ENCODE measurements at regions of chr1 and their contacts with region 1.

Region 1: DNA sequence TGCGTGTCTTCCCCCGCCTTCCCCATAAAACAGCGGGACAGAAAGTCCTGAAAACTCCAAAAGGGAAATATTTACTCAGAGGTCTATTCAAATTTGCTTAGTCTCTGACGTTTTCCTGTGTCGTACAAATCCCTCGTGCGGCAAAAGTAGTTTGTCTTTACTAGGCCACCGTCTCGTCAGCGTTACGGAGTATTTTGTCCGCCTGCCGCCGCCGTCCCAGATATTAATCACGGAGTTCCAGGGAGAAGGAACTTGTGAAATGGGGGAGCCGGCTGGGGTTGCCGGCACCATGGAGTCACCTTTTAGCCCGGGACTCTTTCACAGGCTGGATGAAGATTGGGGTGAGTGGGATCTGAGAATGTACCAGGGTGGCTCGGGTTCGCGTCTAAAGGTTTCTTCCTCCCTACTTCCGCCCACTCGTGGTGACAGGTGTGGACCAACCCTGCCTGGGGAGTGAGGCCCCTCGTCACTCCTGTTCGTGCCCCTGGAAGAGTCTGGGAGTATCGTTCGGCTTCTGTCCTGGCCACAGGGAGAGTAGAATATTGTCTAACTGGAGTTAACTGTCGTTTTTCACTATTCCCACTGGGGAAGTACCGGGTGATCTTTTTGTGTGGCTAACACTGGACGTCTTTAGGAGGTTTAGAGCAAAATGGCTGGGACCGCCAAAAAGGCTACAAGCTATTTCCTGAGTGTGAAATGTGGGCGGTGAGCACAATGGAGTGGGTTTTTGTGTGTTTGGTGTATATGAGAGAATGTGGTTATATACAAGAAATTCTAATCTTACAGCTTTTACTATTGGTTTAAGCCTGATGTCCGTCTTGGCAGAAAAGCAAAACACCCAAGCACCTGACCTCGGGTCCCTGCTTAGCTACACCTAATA is at the start of gene ATF6:
- DNase-seq: peak; percentile 78 to 97
- ATAC-seq: peak; percentile 75 to 84
- H3K4me3 ChIP-seq: peak within 1 kb of the TSS; percentile 93
- H3K27ac ChIP-seq: peak within 1 kb of the TSS; percentile 92 to 94
- H3K4me1 ChIP-seq: peaks cover 10% of the 10 kb centered on the region; the same call in 1 of the 3 replicates
- CTCF ChIP-seq: no peak
- EP300 ChIP-seq: 0 out of 5 replicates have a peak, but pooled peaks of 1 of the 2 experiments have one; percentile 19
- POLR2A ChIP-seq: peak; percentile 43
- RAD21 ChIP-seq: no peak
- polyA plus RNA-seq, gene ATF6: 26.8 and 28.0 TPM in 2 replicates

Region 2: DNA sequence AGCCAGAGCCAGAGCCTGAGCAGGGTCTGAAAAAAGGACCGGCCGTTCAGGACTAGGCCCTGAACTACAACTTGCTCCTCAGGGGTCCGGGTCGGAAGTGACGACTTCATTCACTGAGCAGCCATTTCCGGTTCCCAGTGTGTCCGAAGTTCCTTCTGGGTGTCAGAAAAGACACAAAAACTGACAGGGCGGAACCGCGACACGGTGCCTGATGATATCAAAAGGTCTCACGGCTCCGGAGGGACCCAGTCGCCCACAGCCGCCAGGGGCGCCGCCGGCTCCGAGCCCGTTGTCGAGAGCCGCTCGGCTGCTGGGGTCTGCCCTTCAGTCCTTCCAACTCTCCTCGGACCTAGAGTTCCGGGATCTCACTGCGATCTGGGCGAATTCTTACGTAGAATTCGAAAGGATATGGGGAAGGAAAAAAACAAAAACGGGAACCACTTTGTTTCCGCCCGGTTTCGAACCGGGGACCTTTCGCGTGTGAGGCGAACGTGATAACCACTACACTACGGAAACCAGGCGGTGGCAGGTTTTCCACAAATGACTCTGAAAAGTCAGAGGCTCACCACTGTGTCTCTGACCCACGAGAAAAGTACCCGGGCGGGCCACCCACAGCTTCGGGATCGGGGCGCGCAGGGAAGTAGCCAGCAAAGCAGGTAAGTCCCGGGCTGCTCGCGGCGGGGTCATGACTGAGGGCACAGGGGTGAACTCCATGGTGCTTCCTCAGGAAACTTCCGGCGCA is 366.9 kb before region 1 on chr1:
- CTCF ChIA-PET with region 1: no interaction called
- POLR2A ChIA-PET with region 1: no interaction called
- DNase-seq: peak; percentile 93 to 96
- ATAC-seq: peak; percentile 85 to 87
- H3K4me3 ChIP-seq: peak overlapping the region; percentile 68
- H3K27ac ChIP-seq: peak overlapping the region; percentile 94 to 97
- H3K4me1 ChIP-seq: peaks cover 21% of the 10 kb centered on the region
- CTCF ChIP-seq: no peak; the same call in 2 of the 3 replicates
- EP300 ChIP-seq: no peak
- POLR2A ChIP-seq: peak; percentile 73
- RAD21 ChIP-seq: no peak; a peak in 1 of 5 replicates

Region 3: GRCh38 chr1:162040681-162041080 is 274.3 kb after region 1 on chr1:
- CTCF ChIA-PET with region 1: interaction called, 13 read pairs
- POLR2A ChIA-PET with region 1: no interaction called
- DNase-seq: peak in 1 of 2 experiments; percentile 44
- ATAC-seq: peak in 1 of 2 experiments; percentile 64; a peak in 3 of 6 replicates
- H3K4me3 ChIP-seq: no peak overlapping the region
- H3K27ac ChIP-seq: no peak overlapping the region
- H3K4me1 ChIP-seq: no peaks in the 10 kb centered on the region
- CTCF ChIP-seq: peak; percentile 28
- EP300 ChIP-seq: no peak
- POLR2A ChIP-seq: no peak
- RAD21 ChIP-seq: peak in 1 of 2 experiments; percentile 33; a peak in 1 of 5 replicates

Measured in A549 (cell line).